ENCODE measurements at regions of chr2 and their contacts with region 1.

Region 1: DNA sequence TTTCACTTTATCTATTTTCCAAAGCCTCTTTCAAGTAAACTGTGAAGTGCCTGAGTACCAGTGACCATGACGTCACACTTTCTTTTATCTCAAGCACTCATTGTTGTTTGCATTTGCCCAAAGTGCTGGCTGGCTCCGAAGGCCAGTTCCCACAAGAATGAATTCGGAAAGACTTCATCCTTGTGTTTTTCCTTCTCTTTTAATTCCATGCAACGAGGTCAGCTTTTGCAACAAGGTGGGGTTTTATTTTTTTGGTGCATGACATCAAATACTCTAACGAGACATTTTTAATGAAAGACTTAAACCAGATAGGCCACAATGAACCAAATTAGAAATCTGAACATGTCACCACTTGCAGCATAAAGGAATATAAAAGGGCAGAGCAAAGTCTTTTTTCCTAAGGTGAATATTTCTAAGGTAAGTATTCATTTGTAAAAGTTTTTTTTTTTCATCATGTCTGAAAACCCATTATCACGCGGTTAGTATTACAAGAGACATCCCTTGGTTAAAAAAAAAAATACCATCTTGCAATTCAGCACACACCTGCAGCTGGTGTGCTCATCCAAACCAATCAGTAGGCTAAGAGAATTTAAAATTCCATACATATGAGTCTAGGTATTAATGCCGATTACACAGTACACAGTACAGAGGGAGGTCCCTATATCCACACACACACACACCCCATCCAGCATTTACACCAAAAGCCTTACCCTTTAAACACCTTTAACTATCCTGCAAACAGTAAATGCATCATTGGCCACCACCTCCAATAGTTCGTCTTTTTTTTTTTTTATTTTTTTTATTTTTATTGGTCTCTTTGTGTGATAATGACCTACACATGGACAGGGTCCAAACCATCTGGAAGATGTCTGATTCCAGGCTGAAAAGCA is 2.3 kb downstream of the ARL4C start:
- DNase-seq: peak; percentile 85
- H3K4me3 Mint-ChIP-seq: peak overlapping the region; percentile 90
- H3K27ac Mint-ChIP-seq: peak overlapping the region; percentile 94
- H3K4me1 Mint-ChIP-seq: peaks cover 56% of the 10 kb centered on the region
- H3K27me3 Mint-ChIP-seq: no peaks in the 10 kb centered on the region

Region 2: DNA sequence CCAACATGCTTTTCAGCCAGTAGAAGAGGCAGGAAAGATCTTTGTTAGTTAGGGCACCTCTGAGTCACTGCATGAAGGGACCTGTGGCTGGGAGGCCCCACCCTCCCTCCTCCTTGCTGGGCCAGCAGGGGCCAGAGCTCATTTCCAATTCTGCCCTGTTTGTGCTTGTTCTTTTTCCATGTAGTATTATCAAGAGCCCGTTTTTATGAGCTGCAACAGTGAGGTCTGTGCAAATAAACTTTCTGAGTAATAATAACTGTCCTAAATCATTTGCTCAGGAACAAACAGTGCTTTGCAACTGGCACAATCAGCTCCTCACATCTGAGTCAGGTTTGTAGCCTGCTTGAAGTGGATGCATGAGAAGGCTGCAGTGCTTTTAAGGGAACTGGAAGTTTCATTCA is 125.7 kb before region 1 on chr2:
- intact Hi-C with region 1: loop called (anchors 2 kb)
- DNase-seq: peak; percentile 85
- H3K4me3 Mint-ChIP-seq: peak overlapping the region; percentile 10
- H3K27ac Mint-ChIP-seq: peak overlapping the region; percentile 69
- H3K4me1 Mint-ChIP-seq: peaks cover 69% of the 10 kb centered on the region
- H3K27me3 Mint-ChIP-seq: no peaks in the 10 kb centered on the region

Region 3: DNA sequence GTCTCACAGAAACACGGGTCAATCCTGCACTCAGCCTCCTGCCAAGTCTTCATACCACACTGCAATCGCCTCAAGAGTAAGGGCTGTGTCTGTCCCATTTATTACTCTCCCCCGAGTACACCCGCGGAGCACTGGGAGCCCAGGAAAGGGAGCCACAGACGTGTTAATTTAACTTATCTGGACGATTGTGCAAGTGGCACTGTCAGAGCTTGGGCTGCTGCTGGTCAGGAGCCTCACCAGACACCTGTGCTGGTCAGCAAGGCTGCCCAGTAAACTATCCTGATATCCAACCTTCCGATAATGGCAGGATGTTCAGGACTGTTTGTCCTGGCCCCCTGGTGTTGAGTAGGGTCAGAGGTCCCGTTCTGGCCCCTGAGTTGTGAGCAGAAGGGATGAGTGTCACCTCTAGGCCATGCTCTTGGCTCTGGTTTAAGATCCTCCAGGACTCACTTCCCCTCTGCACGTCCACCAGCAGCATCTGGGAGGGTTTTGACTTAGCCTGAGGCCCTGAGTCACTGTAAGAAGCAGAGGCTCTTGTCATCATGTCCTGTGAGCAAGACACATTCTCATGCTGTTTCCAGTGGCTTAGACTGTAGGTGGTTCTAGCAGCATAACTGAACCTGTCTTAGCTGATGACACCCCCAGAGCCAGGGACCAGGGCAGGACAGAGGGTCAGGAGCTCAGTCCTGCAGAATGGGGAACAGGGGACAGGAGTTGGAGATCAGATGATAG is 84.8 kb after region 1 on chr2:
- intact Hi-C with region 1: no loop called
- DNase-seq: no peak
- H3K4me3 Mint-ChIP-seq: no peak overlapping the region
- H3K27ac Mint-ChIP-seq: no peak overlapping the region
- H3K4me1 Mint-ChIP-seq: no peaks in the 10 kb centered on the region
- H3K27me3 Mint-ChIP-seq: peaks cover 3% of the 10 kb centered on the region

Measured in activated CD4-positive, alpha-beta T cell treated with anti-CD3 and anti-CD28 coated beads, Interleukin-2, amount 10 ng/mL, durations not matched to agents 24 days and 14 days (primary cell).